A549 (cell line): ENCODE measurements at regions of chr20 and their contacts with region 1.

Region 1: DNA sequence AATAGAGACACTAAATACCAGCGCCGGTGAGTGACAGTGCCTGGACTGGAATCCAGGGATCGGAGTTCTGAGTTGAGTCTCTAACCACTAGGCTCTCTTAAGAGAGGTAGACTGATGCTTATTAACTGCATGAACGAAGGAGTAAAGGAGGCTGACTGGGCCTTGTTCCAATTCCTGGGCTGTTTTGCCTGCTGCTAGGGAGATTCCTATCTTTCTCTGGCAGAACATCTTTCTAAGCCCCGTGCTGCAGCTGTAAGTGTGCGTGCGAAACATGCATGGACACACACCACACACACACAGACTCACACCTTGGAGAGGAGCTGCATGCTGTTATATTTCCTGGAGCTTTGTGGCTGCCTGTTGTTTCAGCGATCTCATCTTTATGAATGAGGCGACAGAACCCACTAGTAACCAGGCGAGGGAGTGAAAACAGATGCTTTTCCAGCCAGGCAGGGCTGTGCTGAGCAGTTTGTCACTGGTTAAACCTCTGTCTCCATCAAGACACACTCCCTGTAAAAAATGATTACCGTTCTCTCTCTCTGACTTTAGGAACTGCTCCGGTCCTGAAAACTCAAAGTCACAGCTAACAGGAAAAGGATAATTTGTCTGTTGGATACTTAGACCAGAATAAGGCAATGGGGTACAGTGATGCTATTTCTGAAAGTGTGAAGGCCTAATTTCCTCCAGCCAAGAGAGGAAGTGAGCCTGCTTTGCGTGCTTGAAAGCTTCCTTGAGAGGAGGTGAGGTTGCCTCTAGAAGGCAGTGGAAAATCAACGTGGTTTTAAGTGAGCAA is 157.4 kb upstream of the ZNF217 start:
- DNase-seq: no peak
- ATAC-seq: peak in 1 of 2 experiments; percentile 12; a peak in 1 of 6 replicates
- H3K4me3 ChIP-seq: no peak overlapping the region
- H3K27ac ChIP-seq: peak overlapping the region; percentile 86
- H3K4me1 ChIP-seq: peaks cover 53% of the 10 kb centered on the region
- CTCF ChIP-seq: no peak
- EP300 ChIP-seq: no peak
- POLR2A ChIP-seq: no peak
- RAD21 ChIP-seq: no peak

Region 2: GRCh38 chr20:53578492-53579222 is 172.4 kb before region 1 on chr20:
- CTCF ChIA-PET with region 1: interaction called, 10 read pairs
- POLR2A ChIA-PET with region 1: interaction called, 9 read pairs
- DNase-seq: peak; percentile 90
- ATAC-seq: peak; percentile 57 to 73; a peak in 5 of 6 replicates
- H3K4me3 ChIP-seq: peak overlapping the region; percentile 21; the same call in 2 of the 3 replicates
- H3K27ac ChIP-seq: peak overlapping the region; percentile 75 to 87
- H3K4me1 ChIP-seq: peaks cover 62% of the 10 kb centered on the region
- CTCF ChIP-seq: peak; percentile 91
- EP300 ChIP-seq: no peak
- POLR2A ChIP-seq: no peak
- RAD21 ChIP-seq: peak; percentile 83 to 91

Region 3: DNA sequence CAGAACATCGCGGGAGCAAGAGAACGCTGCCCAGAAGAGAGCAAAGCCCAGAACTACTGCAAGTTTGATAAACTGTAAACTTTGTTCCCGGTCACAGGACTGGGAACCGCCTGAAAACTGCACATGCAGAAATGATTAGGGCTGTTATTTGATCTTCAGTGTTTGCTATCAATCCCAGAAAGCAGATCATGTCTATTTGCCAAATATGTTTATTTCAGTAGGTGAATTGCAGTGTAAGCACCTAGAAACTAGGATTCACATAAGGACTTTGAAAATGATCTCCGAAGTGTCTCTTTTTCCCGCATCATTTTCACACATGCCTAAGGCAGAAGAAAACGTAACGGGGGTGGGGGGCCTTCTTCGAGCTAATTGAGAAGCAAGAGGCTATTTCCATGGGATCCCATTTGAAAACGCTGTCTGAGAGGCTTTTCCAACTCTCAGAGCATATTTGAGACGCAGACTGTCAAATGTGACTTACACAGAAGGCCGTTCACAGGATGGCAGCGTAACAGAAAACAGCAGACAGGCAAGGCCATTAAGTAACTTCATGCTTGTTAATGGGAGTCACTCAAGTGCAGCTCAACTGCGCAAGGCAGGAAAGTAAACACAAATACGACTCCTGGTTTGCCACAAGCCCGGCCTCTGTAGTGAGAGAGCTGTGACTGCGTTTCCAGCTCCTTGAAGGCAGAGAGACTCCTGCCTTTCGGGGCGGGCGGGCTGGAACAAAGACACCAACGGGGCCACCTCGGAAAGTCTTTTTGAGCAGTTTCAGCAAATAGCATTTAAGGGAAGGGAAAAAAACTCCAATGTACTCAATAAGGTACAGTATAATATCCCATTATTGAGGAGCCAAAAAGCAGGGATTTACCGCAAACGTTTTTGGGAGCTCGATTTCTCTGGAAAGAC is 12.7 kb before region 1 on chr20:
- CTCF ChIA-PET with region 1: interaction called, 17 read pairs
- POLR2A ChIA-PET with region 1: interaction called, 19 read pairs
- DNase-seq: peak; percentile 67 to 95
- ATAC-seq: peak; percentile 90 to 91
- H3K4me3 ChIP-seq: peak overlapping the region; percentile 27; the same call in 2 of the 3 replicates
- H3K27ac ChIP-seq: peak overlapping the region; percentile 89 to 90
- H3K4me1 ChIP-seq: peaks cover 72% of the 10 kb centered on the region
- CTCF ChIP-seq: no peak
- EP300 ChIP-seq: no peak
- POLR2A ChIP-seq: peak; percentile 41
- RAD21 ChIP-seq: peak; percentile 13 to 37; a peak in 3 of 5 replicates

Region 4: GRCh38 chr20:53763707-53764414 is 12.8 kb after region 1 on chr20:
- CTCF ChIA-PET with region 1: interaction called, 11 read pairs
- POLR2A ChIA-PET with region 1: interaction called, 3 read pairs
- DNase-seq: peak; percentile 57 to 96
- ATAC-seq: peak; percentile 88 to 98
- H3K4me3 ChIP-seq: peak overlapping the region; percentile 31; the same call in 2 of the 3 replicates
- H3K27ac ChIP-seq: peak overlapping the region; percentile 92 to 94
- H3K4me1 ChIP-seq: peaks cover 42% of the 10 kb centered on the region
- CTCF ChIP-seq: no peak
- EP300 ChIP-seq: peak; percentile 65; a peak in 3 of 5 replicates
- POLR2A ChIP-seq: no peak
- RAD21 ChIP-seq: peak in 1 of 2 experiments; percentile 35; a peak in 3 of 5 replicates

Region 5: DNA sequence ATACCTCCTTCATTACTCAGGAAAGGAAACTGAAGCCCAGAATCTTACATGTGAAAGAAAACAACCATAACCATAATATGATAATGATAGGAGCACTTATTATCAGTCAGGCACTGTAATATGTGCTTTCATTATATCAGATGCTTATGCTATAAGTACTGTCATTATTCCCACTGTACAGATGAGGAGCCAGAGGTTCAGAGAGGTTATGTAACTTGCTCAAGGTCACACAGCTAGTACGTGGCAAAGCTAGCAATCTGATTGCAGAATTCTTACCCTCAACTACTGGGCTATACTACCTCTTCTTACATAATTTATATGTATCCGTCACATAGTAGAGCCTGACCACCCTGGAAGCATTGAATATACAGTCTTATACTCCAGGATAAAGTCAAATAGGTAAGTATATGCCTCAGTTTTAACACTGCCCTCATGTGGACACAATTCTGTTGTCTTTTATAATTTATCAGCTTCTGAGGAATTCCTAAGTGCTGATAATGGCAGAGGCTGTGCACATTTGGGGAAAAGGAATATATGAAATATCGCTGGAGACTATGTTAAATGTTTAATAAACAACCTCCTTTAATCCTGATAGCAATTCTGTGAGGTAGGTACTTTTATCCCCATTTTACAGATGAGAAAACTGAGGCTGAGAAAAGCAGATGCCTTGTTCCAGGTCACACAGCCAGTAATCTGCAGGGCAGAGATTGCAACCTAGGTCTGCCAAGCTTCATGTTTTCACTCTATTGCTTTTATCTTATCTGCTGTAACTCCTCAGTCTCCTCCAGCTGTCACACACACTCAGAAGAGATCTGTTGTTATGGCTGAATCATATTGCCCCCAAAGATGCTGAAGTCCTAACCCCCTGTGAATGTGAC is 306.0 kb after region 1 on chr20:
- CTCF ChIA-PET with region 1: no interaction called
- POLR2A ChIA-PET with region 1: no interaction called
- DNase-seq: no peak
- ATAC-seq: no peak
- H3K4me3 ChIP-seq: no peak overlapping the region
- H3K27ac ChIP-seq: no peak overlapping the region
- H3K4me1 ChIP-seq: peaks cover 9% of the 10 kb centered on the region
- CTCF ChIP-seq: no peak
- EP300 ChIP-seq: no peak
- POLR2A ChIP-seq: no peak
- RAD21 ChIP-seq: peak in 1 of 2 experiments; percentile 7; a peak in 1 of 5 replicates